ENCODE measurements at regions of chr1 and their contacts with region 1.

Region 1: GRCh38 chr1:236612349-236612748 is 8.0 kb upstream of the HEATR1 start:
- DNase-seq: no peak
- H3K4me3 ChIP-seq: no peak overlapping the region
- H3K27ac ChIP-seq: no peak overlapping the region
- H3K4me1 ChIP-seq: no peaks in the 10 kb centered on the region
- H3K27me3 ChIP-seq: no peaks in the 10 kb centered on the region
- CTCF ChIP-seq: no peak

Region 2: GRCh38 chr1:236530959-236531358 is 81.4 kb before region 1 on chr1:
- CTCF ChIA-PET with region 1: no interaction called
- POLR2A ChIA-PET with region 1: no interaction called
- intact Hi-C with region 1: no loop called
- DNase-seq: no peak
- H3K4me3 ChIP-seq: no peak overlapping the region
- H3K27ac ChIP-seq: no peak overlapping the region
- H3K4me1 ChIP-seq: peaks cover 9% of the 10 kb centered on the region
- H3K27me3 ChIP-seq: no peaks in the 10 kb centered on the region
- CTCF ChIP-seq: no peak

Region 3: GRCh38 chr1:236685917-236686814 is 73.8 kb after region 1 on chr1 and contains the start of gene ACTN2:
- CTCF ChIA-PET with region 1: no interaction called
- POLR2A ChIA-PET with region 1: no interaction called
- intact Hi-C with region 1: loop called (anchors 5 kb)
- DNase-seq: peak; percentile 77
- H3K4me3 ChIP-seq: peak within 1 kb of the TSS; percentile 69
- H3K27ac ChIP-seq: peak within 1 kb of the TSS; percentile 80
- H3K4me1 ChIP-seq: peaks cover 16% of the 10 kb centered on the region
- H3K27me3 ChIP-seq: no peaks in the 10 kb centered on the region
- CTCF ChIP-seq: no peak
- total RNA-seq, gene ACTN2: 34.2 and 39.4 TPM in 2 replicates

Measured in A673 (cell line).